Activated B cell treated with CpG ODN at 0.5 μM for 24 hours (primary cell): ENCODE measurements at regions of chr17 and their contacts with region 1.

Region 1: GRCh38 chr17:32569171-32570080 is 82.6 kb downstream of the CDK5R1 start:
- DNase-seq: no peak
- ATAC-seq: no peak
- H3K4me3 Mint-ChIP-seq: peak overlapping the region; percentile 17
- H3K27ac Mint-ChIP-seq: peak overlapping the region; percentile 5
- H3K4me1 Mint-ChIP-seq: peaks cover 18% of the 10 kb centered on the region
- H3K27me3 Mint-ChIP-seq: no peaks in the 10 kb centered on the region
- CTCF ChIP-seq: no peak

Region 2: GRCh38 chr17:32275060-32276042 is 294.1 kb before region 1 on chr17:
- CTCF ChIA-PET with region 1: no interaction called
- POLR2A ChIA-PET with region 1: no interaction called
- intact Hi-C with region 1: no loop called
- DNase-seq: no peak
- ATAC-seq: peak; percentile 81
- H3K4me3 Mint-ChIP-seq: no peak overlapping the region
- H3K27ac Mint-ChIP-seq: no peak overlapping the region
- H3K4me1 Mint-ChIP-seq: peaks cover 10% of the 10 kb centered on the region
- H3K27me3 Mint-ChIP-seq: peaks cover 36% of the 10 kb centered on the region
- CTCF ChIP-seq: no peak

Region 3: GRCh38 chr17:32558997-32559650 is 10.3 kb before region 1 on chr17:
- CTCF ChIA-PET with region 1: no interaction called
- POLR2A ChIA-PET with region 1: no interaction called
- intact Hi-C with region 1: loop called (anchors 2 kb)
- DNase-seq: no peak
- ATAC-seq: peak; percentile 64
- H3K4me3 Mint-ChIP-seq: peak overlapping the region; percentile 48
- H3K27ac Mint-ChIP-seq: peak overlapping the region; percentile 86
- H3K4me1 Mint-ChIP-seq: peaks cover 38% of the 10 kb centered on the region
- H3K27me3 Mint-ChIP-seq: no peaks in the 10 kb centered on the region
- CTCF ChIP-seq: no peak

Region 4: GRCh38 chr17:32621617-32622312 is 52.3 kb after region 1 on chr17:
- CTCF ChIA-PET with region 1: no interaction called
- POLR2A ChIA-PET with region 1: no interaction called
- intact Hi-C with region 1: no loop called
- DNase-seq: no peak
- ATAC-seq: no peak
- H3K4me3 Mint-ChIP-seq: no peak overlapping the region
- H3K27ac Mint-ChIP-seq: no peak overlapping the region
- H3K4me1 Mint-ChIP-seq: no peaks in the 10 kb centered on the region
- H3K27me3 Mint-ChIP-seq: no peaks in the 10 kb centered on the region
- CTCF ChIP-seq: no peak